ENCODE measurements at regions of chr7 and their contacts with region 1.

Region 1: GRCh38 chr7:27196287-27196767 is 3.6 kb downstream of the HOXA13 start:
- DNase-seq: peak; percentile 93
- ATAC-seq: no peak

Region 2: GRCh38 chr7:27775782-27776181 is 579.5 kb after region 1 on chr7:
- intact Hi-C with region 1: loop called (anchors 2 kb)
- DNase-seq: no peak
- ATAC-seq: no peak

Region 3: DNA sequence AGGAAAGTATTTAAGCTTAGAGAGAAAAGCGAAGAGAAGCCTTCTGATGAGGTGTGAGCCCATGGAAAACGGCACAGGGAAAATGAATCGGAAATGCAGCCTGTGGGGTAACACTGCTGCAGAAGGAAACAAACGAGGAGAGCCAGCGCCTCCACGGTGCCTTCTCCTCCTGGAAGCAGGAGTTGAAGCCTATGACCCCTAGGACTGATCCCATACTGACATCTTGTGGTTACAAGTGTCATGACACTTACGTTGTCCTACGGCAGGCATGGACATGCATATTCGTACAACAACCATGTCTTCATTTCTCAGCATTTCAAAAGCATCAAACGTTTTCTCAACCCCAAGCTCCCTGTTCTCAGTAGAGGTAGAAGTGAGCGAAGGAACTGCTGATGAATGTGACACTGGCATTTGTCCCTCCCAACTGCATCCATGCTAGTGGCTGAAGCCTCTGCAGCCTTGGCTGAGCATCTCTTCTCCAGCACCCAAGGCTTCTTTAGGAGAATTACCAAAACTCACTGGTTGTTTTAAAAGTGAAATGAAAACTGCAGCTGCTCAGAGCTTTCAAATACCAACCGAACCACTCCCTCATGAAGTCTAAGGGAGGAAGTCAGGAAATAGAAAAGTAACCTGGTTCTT is 824.1 kb after region 1 on chr7:
- intact Hi-C with region 1: loop called (anchors 10 kb)
- DNase-seq: peak; percentile 75
- ATAC-seq: peak; percentile 94